Heart right ventricle (tissue), 16 donors: ENCODE measurements at regions of chr3 and their contacts with region 1.

Region 1: DNA sequence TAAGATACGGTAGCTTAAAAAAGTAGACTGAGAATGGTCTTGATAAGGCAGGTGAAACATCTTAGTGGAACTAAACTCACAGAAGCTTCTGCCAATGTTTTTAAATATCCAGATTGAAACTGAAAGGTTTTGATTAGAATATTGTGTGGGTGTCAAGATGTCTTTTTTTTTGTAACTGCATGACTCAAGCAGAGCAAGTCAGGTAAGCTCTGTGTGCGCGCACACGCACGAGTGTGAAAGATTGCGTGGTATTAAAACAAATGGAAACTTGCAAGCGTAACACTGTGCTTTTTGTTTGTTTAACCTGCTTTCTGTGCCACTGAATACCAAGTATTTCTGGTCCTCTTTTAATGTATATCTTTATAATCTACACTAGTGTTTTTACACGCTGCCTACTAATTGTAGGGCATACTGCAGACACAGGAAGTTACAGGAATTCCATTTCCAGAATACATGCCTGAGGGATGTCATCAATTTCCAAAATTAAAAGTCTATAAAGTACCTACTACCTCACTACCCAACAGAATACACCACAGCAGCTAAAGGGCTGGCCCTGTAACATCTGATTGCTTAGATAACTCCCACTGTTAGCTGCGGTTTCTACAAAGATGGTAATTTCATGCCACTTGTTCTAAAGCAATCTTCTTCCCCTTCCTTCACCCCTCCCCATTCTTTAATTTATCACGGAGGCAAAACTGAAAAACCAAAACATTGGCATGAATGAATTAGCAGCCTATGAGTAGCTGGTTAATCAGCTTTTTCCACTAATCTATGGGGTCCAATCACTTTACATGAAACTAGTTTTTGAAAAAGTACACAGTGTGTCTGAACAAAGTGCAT is 472.8 kb downstream of the SHQ1 start:
- DNase-seq: no peak
- ATAC-seq: no peak
- H3K4me3 ChIP-seq: no peak overlapping the region
- H3K27ac ChIP-seq: no peak overlapping the region
- H3K4me1 ChIP-seq: peaks cover 0 to 29% (median 10%) of the 10 kb centered on the region in 9 donors
- H3K27me3 ChIP-seq: no peaks in the 10 kb centered on the region
- CTCF ChIP-seq: no peak

Region 2: DNA sequence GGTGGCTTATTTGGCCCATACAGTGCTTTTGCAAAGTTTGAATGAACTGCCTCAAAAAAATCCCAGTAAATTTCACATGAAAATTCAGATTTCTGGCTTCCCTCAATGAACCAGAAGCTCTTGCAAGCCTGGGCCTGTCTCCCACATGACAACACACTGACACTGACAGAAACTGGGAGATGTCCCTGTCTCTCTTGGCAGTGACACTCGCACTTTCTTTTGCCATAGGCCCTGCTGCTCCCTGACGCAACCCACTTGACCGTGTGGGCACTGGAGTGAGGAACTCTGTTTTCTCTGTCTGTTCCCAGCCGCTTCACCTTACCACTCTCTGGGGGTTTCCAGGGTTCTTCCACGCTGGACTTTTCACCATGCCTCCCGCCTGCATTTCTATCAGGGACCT is 51.7 kb before region 1 on chr3:
- intact Hi-C with region 1: loop called in 1 of 10 experiments (anchors 2 kb)
- DNase-seq: no peak
- ATAC-seq: peak in 3 of 8 donors; percentile 36 to 66 (median 58)
- H3K4me3 ChIP-seq: no peak overlapping the region
- H3K27ac ChIP-seq: no peak overlapping the region
- H3K4me1 ChIP-seq: peaks cover 5 to 24% (median 9%) of the 10 kb centered on the region in 9 donors
- H3K27me3 ChIP-seq: no peaks in the 10 kb centered on the region
- CTCF ChIP-seq: no peak